ENCODE measurements at regions of chr5 and their contacts with region 1.

Region 1: GRCh38 chr5:74640450-74640953 is at the start of gene ENC1:
- DNase-seq: peak; percentile 88
- H3K4me3 ChIP-seq: peak within 1 kb of the TSS; percentile 66 to 98 (median 93)
- H3K27ac ChIP-seq: peak within 1 kb of the TSS; percentile 91
- H3K4me1 ChIP-seq: peaks cover 60% of the 10 kb centered on the region
- H3K27me3 ChIP-seq: no peaks in the 10 kb centered on the region
- CTCF ChIP-seq: peak; percentile 12 to 59
- total RNA-seq, gene ENC1: 42.4 to 392 TPM

Region 2: GRCh38 chr5:73591102-73591695 is 1049.3 kb before region 1 on chr5:
- CTCF ChIA-PET with region 1: no interaction called
- dilution Hi-C with region 1: no loop called
- in situ Hi-C with region 1: loop called in 1 of 2 experiments (anchors 25 kb)
- intact Hi-C with region 1: no loop called
- DNase-seq: peak; percentile 69
- H3K4me3 ChIP-seq: no peak overlapping the region
- H3K27ac ChIP-seq: no peak overlapping the region
- H3K4me1 ChIP-seq: peaks cover 7% of the 10 kb centered on the region
- H3K27me3 ChIP-seq: no peaks in the 10 kb centered on the region
- CTCF ChIP-seq: peak; percentile 71 to 86

Region 3: GRCh38 chr5:73985145-73985544 is 655.4 kb before region 1 on chr5:
- CTCF ChIA-PET with region 1: no interaction called
- dilution Hi-C with region 1: no loop called
- in situ Hi-C with region 1: no loop called
- intact Hi-C with region 1: loop called (anchors 1 kb)
- DNase-seq: peak; percentile 83
- H3K4me3 ChIP-seq: no peak overlapping the region
- H3K27ac ChIP-seq: peak overlapping the region; percentile 38
- H3K4me1 ChIP-seq: peaks cover 30% of the 10 kb centered on the region
- H3K27me3 ChIP-seq: no peaks in the 10 kb centered on the region
- CTCF ChIP-seq: peak; percentile 54 to 56

Region 4: GRCh38 chr5:74127381-74128320 is 512.9 kb before region 1 on chr5:
- CTCF ChIA-PET with region 1: no interaction called
- dilution Hi-C with region 1: no loop called
- in situ Hi-C with region 1: no loop called
- intact Hi-C with region 1: loop called (anchors 2 kb)
- DNase-seq: peak; percentile 48
- H3K4me3 ChIP-seq: peak overlapping the region in 2 of 3 experiments; percentile 15 to 27
- H3K27ac ChIP-seq: no peak overlapping the region
- H3K4me1 ChIP-seq: peaks cover 15% of the 10 kb centered on the region
- H3K27me3 ChIP-seq: no peaks in the 10 kb centered on the region
- CTCF ChIP-seq: peak; percentile 46 to 62

Region 5: GRCh38 chr5:74240786-74241750 is 399.4 kb before region 1 on chr5:
- CTCF ChIA-PET with region 1: interaction called, 3 read pairs
- dilution Hi-C with region 1: no loop called
- in situ Hi-C with region 1: loop called in 1 of 2 experiments (anchors 25 kb)
- intact Hi-C with region 1: loop called (anchors 1 kb)
- DNase-seq: peak; percentile 100
- H3K4me3 ChIP-seq: peak overlapping the region in 2 of 3 experiments; percentile 3 to 11
- H3K27ac ChIP-seq: peak overlapping the region; percentile 96
- H3K4me1 ChIP-seq: peaks cover 39% of the 10 kb centered on the region
- H3K27me3 ChIP-seq: no peaks in the 10 kb centered on the region
- CTCF ChIP-seq: no peak

Region 6: DNA sequence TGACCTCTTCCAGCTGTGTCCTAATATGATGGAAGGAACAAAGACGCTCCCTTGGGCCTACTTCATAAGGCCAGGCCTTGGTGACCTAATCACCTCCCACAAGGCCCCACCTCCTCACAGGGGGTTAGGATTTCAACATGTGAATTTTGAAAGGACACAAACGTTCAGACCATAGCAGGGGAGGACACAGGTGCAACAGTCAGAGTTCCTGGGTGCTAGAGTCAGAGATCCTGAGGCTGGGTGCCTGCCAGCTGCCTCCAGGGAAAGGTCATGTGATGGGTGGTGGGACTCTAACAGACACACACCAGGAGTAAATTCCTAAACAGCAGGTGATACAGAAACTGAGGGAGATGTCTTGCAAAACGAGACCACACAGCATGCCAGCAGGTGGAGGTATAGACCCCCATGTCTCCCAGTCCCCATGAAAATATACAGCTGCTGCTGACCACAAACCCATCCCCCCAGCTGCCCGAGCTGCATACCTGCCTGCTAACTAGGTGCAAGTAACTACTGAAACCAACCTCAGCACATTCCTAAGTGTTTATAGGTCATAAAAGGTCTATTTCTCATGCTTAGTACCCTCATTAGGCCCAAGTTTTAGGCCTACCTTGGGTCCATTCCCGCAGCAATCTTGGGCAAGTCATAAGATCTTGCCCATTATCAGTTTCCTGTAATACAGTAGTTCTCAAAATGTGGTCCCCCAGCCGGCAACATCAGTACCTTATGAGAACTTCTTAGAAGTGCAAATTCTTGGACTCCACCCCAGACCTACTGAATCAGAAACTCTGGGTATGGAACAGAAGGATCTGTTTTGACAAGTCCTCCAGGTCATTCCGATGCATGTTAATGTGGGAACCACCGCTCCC is 245.4 kb before region 1 on chr5:
- CTCF ChIA-PET with region 1: interaction called, 4 read pairs
- dilution Hi-C with region 1: no loop called
- in situ Hi-C with region 1: loop called (anchors 5 to 10 kb)
- intact Hi-C with region 1: loop called (anchors 1 kb)
- DNase-seq: peak; percentile 94
- H3K4me3 ChIP-seq: no peak overlapping the region
- H3K27ac ChIP-seq: peak overlapping the region; percentile 90
- H3K4me1 ChIP-seq: peaks cover 29% of the 10 kb centered on the region
- H3K27me3 ChIP-seq: no peaks in the 10 kb centered on the region
- CTCF ChIP-seq: peak; percentile 9 to 36

Region 7: GRCh38 chr5:74622122-74622521 is 18.4 kb before region 1 on chr5:
- CTCF ChIA-PET with region 1: no interaction called
- dilution Hi-C with region 1: no loop called
- in situ Hi-C with region 1: no loop called
- intact Hi-C with region 1: loop called (anchors 1 kb)
- DNase-seq: peak; percentile 70
- H3K4me3 ChIP-seq: no peak overlapping the region
- H3K27ac ChIP-seq: no peak overlapping the region
- H3K4me1 ChIP-seq: peaks cover 38% of the 10 kb centered on the region
- H3K27me3 ChIP-seq: no peaks in the 10 kb centered on the region
- CTCF ChIP-seq: no peak